GM12878 (cell line): ENCODE measurements at regions of chr21 and their contacts with region 1.

Region 1: DNA sequence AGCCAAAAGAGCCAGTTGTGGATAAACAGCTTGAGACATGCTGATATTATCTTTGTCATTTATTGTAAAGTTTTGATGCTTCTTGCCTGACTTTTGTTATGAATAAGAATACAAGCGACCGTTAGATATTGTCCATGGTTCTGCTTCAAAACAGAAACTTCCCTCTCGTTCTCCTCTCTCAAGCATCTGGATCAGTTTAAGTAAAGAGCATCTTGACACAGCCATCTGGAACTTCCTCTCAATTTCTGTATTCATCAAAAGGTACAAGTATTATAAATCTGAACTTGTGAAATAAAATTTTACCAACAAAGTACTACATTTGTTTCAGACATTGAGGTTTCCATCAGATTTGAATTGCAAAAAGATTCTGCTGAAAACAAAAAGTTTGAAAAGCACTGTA is 36.4 kb upstream of the CLDN14 start:
- DNase-seq: no peak
- ATAC-seq: no peak
- H3K4me3 ChIP-seq: peak overlapping the region; percentile 43
- H3K27ac ChIP-seq: peak overlapping the region; percentile 83
- H3K4me1 ChIP-seq: peaks cover 74% of the 10 kb centered on the region
- H3K27me3 ChIP-seq: no peaks in the 10 kb centered on the region
- CTCF ChIP-seq: no peak
- EP300 ChIP-seq: no peak
- POLR2A ChIP-seq: no peak
- RAD21 ChIP-seq: no peak

Region 2: DNA sequence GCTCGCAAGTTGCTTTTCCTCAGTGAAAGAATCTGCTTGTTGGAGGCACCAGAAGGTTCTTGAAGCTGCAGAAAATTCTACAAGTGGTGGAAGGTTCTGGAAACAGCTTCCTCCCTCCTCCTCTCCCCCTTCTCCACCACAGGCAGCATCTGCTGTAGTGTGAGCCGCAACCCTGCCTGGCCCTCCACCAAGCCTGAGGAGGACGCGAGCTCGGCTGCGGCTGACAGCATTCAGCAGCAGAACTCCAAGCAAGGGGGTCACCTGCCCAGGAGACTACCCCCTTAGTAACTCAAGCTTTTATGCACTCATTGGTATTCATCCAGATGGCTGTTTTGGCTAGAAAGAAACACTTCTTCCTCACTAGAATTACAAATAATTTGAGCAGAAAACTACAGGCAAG is 12.4 kb after region 1 on chr21:
- CTCF ChIA-PET with region 1: interaction called, 28 read pairs
- POLR2A ChIA-PET with region 1: interaction called, 146 read pairs
- RAD21 ChIA-PET with region 1: interaction called, 189 read pairs
- SMC1A ChIA-PET with region 1: interaction called, 231 read pairs
- in situ Hi-C with region 1: no loop called
- intact Hi-C with region 1: no loop called
- DNase-seq: no peak
- ATAC-seq: no peak
- H3K4me3 ChIP-seq: no peak overlapping the region
- H3K27ac ChIP-seq: no peak overlapping the region
- H3K4me1 ChIP-seq: no peaks in the 10 kb centered on the region
- H3K27me3 ChIP-seq: no peaks in the 10 kb centered on the region
- CTCF ChIP-seq: no peak
- EP300 ChIP-seq: no peak
- POLR2A ChIP-seq: no peak
- RAD21 ChIP-seq: no peak

Region 3: GRCh38 chr21:36535618-36536241 is 19.4 kb after region 1 on chr21:
- CTCF ChIA-PET with region 1: interaction called, 38 read pairs
- POLR2A ChIA-PET with region 1: interaction called, 146 read pairs
- RAD21 ChIA-PET with region 1: interaction called, 189 read pairs
- SMC1A ChIA-PET with region 1: interaction called, 231 read pairs
- in situ Hi-C with region 1: no loop called
- intact Hi-C with region 1: loop called (anchors 1 kb)
- DNase-seq: peak; percentile 96
- ATAC-seq: peak; percentile 80
- H3K4me3 ChIP-seq: peak overlapping the region; percentile 45; the same call in 1 of the 2 replicates
- H3K27ac ChIP-seq: peak overlapping the region; percentile 90
- H3K4me1 ChIP-seq: peaks cover 40% of the 10 kb centered on the region
- H3K27me3 ChIP-seq: no peaks in the 10 kb centered on the region
- CTCF ChIP-seq: no peak
- EP300 ChIP-seq: peak; percentile 92 to 95
- POLR2A ChIP-seq: peak; percentile 61
- RAD21 ChIP-seq: peak; percentile 6; the same call in 1 of the 2 replicates

Region 4: GRCh38 chr21:37281993-37282392 is 765.7 kb after region 1 on chr21:
- CTCF ChIA-PET with region 1: no interaction called
- POLR2A ChIA-PET with region 1: no interaction called
- RAD21 ChIA-PET with region 1: no interaction called
- SMC1A ChIA-PET with region 1: no interaction called
- in situ Hi-C with region 1: no loop called
- intact Hi-C with region 1: no loop called
- DNase-seq: no peak
- ATAC-seq: no peak
- H3K4me3 ChIP-seq: no peak overlapping the region
- H3K27ac ChIP-seq: no peak overlapping the region
- H3K4me1 ChIP-seq: no peaks in the 10 kb centered on the region
- H3K27me3 ChIP-seq: no peaks in the 10 kb centered on the region
- CTCF ChIP-seq: no peak
- EP300 ChIP-seq: no peak
- POLR2A ChIP-seq: no peak
- RAD21 ChIP-seq: no peak